Natural killer cell (primary cell): ENCODE measurements at regions of chr1 and their contacts with region 1.

Region 1: GRCh38 chr1:13960375-13960987 is 260.5 kb downstream of the PRDM2 start:
- DNase-seq: peak; percentile 58 to 80
- ATAC-seq: peak; percentile 52 to 73 (median 67)
- H3K4me3 ChIP-seq: no peak overlapping the region
- H3K4me3 Mint-ChIP-seq: no peak overlapping the region
- H3K27ac ChIP-seq: no peak overlapping the region
- H3K27ac Mint-ChIP-seq: no peak overlapping the region
- H3K4me1 ChIP-seq: no peaks in the 10 kb centered on the region
- H3K4me1 Mint-ChIP-seq: no peaks in the 10 kb centered on the region
- H3K27me3 ChIP-seq: no peaks in the 10 kb centered on the region
- H3K27me3 Mint-ChIP-seq: peaks cover 16 to 25% of the 10 kb centered on the region in 2 donors
- CTCF ChIP-seq: peak; percentile 95

Region 2: DNA sequence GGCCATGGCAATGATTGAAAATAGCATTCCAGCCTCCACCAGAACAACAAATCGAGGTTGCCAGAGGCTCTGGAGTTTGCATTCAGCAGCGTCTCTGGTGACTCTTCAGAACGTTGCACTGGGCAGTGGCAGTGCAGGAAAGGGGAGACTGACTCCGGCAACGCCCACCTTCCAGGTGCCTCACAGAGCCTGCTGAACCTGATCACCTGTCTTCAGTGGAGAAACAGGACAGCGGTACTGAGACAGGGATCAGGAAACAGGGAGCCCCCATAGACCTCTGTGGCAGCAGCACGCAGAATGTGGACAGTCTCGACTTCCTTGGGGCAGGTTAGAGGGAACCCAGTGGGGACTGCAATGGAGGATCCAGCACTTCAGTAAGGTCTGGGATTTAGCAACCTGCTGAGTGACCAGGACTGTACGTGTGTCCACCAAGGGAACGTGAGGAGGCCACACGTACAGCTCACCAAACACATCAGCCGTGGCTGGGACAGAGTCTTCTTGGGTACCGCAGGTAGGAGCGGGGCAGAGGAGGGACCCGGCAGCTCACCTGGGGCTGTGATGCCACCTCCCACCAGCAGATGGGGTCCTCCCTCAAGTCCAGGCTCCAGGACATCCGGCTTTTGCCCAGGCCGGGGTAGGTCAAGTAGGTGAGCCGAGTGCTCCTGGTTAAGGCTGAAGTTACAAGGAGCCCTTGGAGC is 131.9 kb before region 1 on chr1:
- intact Hi-C with region 1: loop called (anchors 10 kb)
- DNase-seq: peak in 1 of 2 donors; percentile 45
- ATAC-seq: peak; percentile 35 to 71 (median 42)
- H3K4me3 ChIP-seq: no peak overlapping the region
- H3K4me3 Mint-ChIP-seq: no peak overlapping the region
- H3K27ac ChIP-seq: no peak overlapping the region
- H3K27ac Mint-ChIP-seq: no peak overlapping the region
- H3K4me1 ChIP-seq: peaks cover 8% of the 10 kb centered on the region
- H3K4me1 Mint-ChIP-seq: peaks cover 0 to 10% of the 10 kb centered on the region in 2 donors
- H3K27me3 ChIP-seq: no peaks in the 10 kb centered on the region
- H3K27me3 Mint-ChIP-seq: peaks cover 0 to 3% of the 10 kb centered on the region in 2 donors
- CTCF ChIP-seq: peak; percentile 22

Region 3: GRCh38 chr1:14113841-14114567 is 153.5 kb after region 1 on chr1:
- intact Hi-C with region 1: no loop called
- DNase-seq: peak in 1 of 2 donors; percentile 9
- ATAC-seq: no peak
- H3K4me3 ChIP-seq: no peak overlapping the region
- H3K4me3 Mint-ChIP-seq: no peak overlapping the region
- H3K27ac ChIP-seq: no peak overlapping the region
- H3K27ac Mint-ChIP-seq: no peak overlapping the region
- H3K4me1 ChIP-seq: peaks cover 4% of the 10 kb centered on the region
- H3K4me1 Mint-ChIP-seq: peaks cover 11 to 12% of the 10 kb centered on the region in 2 donors
- H3K27me3 ChIP-seq: no peaks in the 10 kb centered on the region
- H3K27me3 Mint-ChIP-seq: peaks cover 13 to 28% of the 10 kb centered on the region in 2 donors
- CTCF ChIP-seq: no peak

Region 4: DNA sequence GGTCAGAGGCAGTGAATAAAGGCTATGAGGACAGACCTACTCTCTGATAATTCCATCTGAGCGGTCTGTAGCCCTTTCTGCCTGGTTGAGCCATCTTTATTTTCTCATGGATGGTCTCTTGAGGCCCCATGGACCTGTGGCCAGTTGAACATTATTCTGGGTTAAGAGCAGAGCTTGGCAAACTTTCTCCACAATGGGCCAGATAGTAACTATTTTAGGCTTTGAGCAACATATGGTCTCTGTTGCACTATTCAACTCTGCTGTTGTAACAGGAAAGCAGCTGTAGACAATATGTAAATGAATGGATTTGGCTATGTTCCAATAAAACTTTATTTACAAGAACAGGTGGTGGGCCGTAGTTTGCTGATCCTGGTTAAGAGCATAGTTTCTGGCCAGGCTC is 700.7 kb after region 1 on chr1:
- intact Hi-C with region 1: no loop called
- DNase-seq: no peak
- ATAC-seq: no peak
- H3K4me3 ChIP-seq: no peak overlapping the region
- H3K4me3 Mint-ChIP-seq: no peak overlapping the region
- H3K27ac ChIP-seq: no peak overlapping the region
- H3K27ac Mint-ChIP-seq: no peak overlapping the region
- H3K4me1 ChIP-seq: no peaks in the 10 kb centered on the region
- H3K4me1 Mint-ChIP-seq: no peaks in the 10 kb centered on the region
- H3K27me3 ChIP-seq: no peaks in the 10 kb centered on the region
- H3K27me3 Mint-ChIP-seq: peaks cover 9 to 17% of the 10 kb centered on the region in 2 donors
- CTCF ChIP-seq: no peak